Sciatic nerve (tissue), 2 donors: ENCODE measurements at regions of chr9 and their contacts with region 1.

Region 1: DNA sequence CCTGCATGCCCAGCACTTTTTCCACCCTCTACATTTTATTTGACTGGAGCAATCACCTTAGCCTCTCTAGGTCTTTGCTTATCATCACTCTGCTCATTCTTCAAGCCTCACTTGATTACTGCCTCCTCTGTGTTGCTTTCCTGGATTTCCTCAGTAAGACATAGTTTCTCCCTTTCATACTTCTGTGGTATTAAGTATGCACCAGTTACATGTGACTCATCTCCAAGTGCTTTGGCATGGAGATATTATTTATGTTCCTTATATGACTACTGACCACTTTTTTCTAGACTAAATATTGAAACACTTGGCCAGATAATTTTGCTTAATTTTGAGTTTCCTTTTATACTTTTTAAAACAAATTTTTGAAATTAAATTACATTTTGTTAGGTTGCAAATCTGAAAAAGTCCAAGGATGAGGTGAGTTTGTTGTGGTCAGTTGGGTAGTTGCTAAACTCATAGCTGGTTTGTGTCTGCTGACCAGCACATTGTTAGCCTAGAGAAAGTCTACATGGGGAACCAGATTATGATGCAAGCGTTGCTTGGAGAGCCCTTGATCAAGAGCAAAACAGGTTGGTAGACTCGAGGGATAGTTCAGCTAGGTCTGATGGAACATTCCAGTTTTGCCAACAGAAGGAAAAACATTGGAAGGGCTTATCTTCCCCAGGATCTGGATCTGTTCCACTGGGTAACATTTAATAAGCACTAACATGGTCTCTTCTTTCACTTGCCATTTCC is 140.2 kb downstream of the TMC1 start:
- DNase-seq: no peak
- ATAC-seq: no peak

Region 2: GRCh38 chr9:72635197-72635596 is 26.4 kb before region 1 on chr9:
- intact Hi-C with region 1: loop called (anchors 1 kb)
- DNase-seq: no peak
- ATAC-seq: no peak

Region 3: DNA sequence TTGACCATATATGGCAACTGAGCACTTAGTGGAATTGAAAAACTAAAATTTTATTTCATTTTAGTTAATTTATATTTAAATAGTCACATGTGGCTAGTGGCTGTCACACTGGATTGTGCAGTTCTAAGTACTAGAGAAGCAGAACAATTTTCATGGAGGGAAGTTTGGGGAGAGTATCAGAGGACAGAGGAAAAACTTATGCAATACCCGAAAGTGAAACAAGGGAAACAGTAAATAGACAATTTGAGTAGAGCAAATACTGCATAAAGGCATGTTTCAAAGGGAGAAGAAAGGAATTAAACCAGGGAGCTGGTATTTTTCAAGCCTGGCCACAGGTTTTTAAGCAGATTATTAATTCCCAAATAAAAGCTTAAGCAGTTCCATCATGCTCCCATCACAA is 1245.1 kb after region 1 on chr9:
- intact Hi-C with region 1: no loop called
- DNase-seq: no peak
- ATAC-seq: no peak